Activated CD4-positive, alpha-beta T cell treated with anti-CD3 and anti-CD28 coated beads for 36 hours (primary cell): ENCODE measurements at regions of chr7 and their contacts with region 1.

Region 1: GRCh38 chr7:81499262-81500116 is 270.4 kb downstream of the HGF start:
- DNase-seq: no peak
- ATAC-seq: no peak
- H3K4me3 Mint-ChIP-seq: no peak overlapping the region
- H3K27ac Mint-ChIP-seq: no peak overlapping the region
- H3K4me1 Mint-ChIP-seq: no peaks in the 10 kb centered on the region
- H3K27me3 Mint-ChIP-seq: no peaks in the 10 kb centered on the region

Region 2: GRCh38 chr7:81594767-81595166 is 95.3 kb after region 1 on chr7:
- CTCF ChIA-PET with region 1: no interaction called
- POLR2A ChIA-PET with region 1: no interaction called
- intact Hi-C with region 1: no loop called
- DNase-seq: no peak
- ATAC-seq: no peak
- H3K4me3 Mint-ChIP-seq: no peak overlapping the region
- H3K27ac Mint-ChIP-seq: no peak overlapping the region
- H3K4me1 Mint-ChIP-seq: no peaks in the 10 kb centered on the region
- H3K27me3 Mint-ChIP-seq: no peaks in the 10 kb centered on the region

Region 3: DNA sequence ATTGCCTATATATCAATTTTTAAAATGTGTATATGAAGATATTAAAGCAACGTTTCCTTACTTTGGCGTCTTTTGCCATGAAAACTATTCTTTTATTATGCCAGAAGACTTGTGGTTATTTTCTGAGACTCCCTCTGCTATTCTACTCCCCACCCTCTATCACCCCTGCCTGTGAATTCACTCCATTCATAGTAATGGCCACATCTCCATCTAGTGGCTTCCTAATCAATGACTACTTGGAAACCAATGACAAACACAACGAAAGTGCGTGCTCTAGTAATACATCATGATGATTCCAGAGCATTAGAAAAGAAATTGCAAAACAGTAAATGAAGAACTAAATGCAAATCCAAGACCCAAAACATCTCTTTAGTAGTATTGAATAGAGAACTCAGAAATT is 457.0 kb after region 1 on chr7:
- CTCF ChIA-PET with region 1: no interaction called
- POLR2A ChIA-PET with region 1: no interaction called
- intact Hi-C with region 1: loop called in 1 of 2 experiments (anchors 2 kb)
- DNase-seq: no peak
- ATAC-seq: no peak
- H3K4me3 Mint-ChIP-seq: no peak overlapping the region
- H3K27ac Mint-ChIP-seq: no peak overlapping the region
- H3K4me1 Mint-ChIP-seq: no peaks in the 10 kb centered on the region
- H3K27me3 Mint-ChIP-seq: no peaks in the 10 kb centered on the region

Region 4: DNA sequence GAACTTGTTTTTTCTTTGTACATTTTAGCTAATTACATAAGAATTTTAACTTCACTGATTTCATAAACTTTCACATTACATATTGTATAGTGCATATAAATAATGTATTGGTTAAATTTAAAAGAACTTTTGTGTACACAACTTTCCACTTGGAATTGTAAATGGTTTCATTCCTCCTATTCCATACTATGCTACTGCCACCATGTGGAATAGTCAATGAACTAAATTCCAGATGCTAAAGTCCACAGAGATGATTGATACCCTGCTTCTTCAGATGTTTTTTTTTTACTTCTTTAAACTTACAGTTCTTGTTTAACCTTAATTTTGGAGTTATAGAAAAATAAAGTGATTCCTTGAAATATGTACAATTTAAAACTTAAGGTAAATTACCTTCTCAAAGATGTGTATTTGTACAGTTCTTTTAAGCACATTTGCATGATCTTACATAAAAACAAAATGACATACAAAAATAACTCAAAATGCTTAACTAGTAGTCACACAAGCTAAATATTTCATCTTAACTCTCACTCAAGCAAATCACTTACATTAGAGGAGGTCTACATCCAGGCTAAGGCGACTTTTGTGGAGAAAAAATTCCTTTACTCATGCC is 518.0 kb after region 1 on chr7:
- CTCF ChIA-PET with region 1: no interaction called
- POLR2A ChIA-PET with region 1: no interaction called
- intact Hi-C with region 1: loop called (anchors 1 to 2 kb)
- DNase-seq: no peak
- ATAC-seq: no peak
- H3K4me3 Mint-ChIP-seq: no peak overlapping the region
- H3K27ac Mint-ChIP-seq: no peak overlapping the region
- H3K4me1 Mint-ChIP-seq: no peaks in the 10 kb centered on the region
- H3K27me3 Mint-ChIP-seq: no peaks in the 10 kb centered on the region

Region 5: GRCh38 chr7:82572195-82572880 is 1072.8 kb after region 1 on chr7:
- CTCF ChIA-PET with region 1: no interaction called
- POLR2A ChIA-PET with region 1: no interaction called
- intact Hi-C with region 1: loop called in 1 of 2 experiments (anchors 5 kb)
- DNase-seq: peak; percentile 83
- ATAC-seq: peak; percentile 61
- H3K4me3 Mint-ChIP-seq: no peak overlapping the region
- H3K27ac Mint-ChIP-seq: no peak overlapping the region
- H3K4me1 Mint-ChIP-seq: no peaks in the 10 kb centered on the region
- H3K27me3 Mint-ChIP-seq: no peaks in the 10 kb centered on the region